CD8-positive, alpha-beta T cell (primary cell): ENCODE measurements at regions of chr10 and their contacts with region 1.

Region 1: GRCh38 chr10:30059209-30060107 is at the start of gene JCAD:
- DNase-seq: peak; percentile 12 to 65 (median 43)
- ATAC-seq: peak; percentile 81
- H3K4me3 ChIP-seq: no peak within 1 kb of the TSS
- H3K4me3 Mint-ChIP-seq: peak within 1 kb of the TSS; percentile 71
- H3K27ac ChIP-seq: no peak within 1 kb of the TSS
- H3K27ac Mint-ChIP-seq: no peak within 1 kb of the TSS
- H3K4me1 ChIP-seq: peaks cover 3% of the 10 kb centered on the region
- H3K4me1 Mint-ChIP-seq: peaks cover 7% of the 10 kb centered on the region
- H3K27me3 ChIP-seq: peaks cover 17 to 28% of the 10 kb centered on the region in 2 experiments
- H3K27me3 Mint-ChIP-seq: peaks cover 67% of the 10 kb centered on the region
- CTCF ChIP-seq: no peak
- total RNA-seq, gene JCAD: not detected

Region 2: DNA sequence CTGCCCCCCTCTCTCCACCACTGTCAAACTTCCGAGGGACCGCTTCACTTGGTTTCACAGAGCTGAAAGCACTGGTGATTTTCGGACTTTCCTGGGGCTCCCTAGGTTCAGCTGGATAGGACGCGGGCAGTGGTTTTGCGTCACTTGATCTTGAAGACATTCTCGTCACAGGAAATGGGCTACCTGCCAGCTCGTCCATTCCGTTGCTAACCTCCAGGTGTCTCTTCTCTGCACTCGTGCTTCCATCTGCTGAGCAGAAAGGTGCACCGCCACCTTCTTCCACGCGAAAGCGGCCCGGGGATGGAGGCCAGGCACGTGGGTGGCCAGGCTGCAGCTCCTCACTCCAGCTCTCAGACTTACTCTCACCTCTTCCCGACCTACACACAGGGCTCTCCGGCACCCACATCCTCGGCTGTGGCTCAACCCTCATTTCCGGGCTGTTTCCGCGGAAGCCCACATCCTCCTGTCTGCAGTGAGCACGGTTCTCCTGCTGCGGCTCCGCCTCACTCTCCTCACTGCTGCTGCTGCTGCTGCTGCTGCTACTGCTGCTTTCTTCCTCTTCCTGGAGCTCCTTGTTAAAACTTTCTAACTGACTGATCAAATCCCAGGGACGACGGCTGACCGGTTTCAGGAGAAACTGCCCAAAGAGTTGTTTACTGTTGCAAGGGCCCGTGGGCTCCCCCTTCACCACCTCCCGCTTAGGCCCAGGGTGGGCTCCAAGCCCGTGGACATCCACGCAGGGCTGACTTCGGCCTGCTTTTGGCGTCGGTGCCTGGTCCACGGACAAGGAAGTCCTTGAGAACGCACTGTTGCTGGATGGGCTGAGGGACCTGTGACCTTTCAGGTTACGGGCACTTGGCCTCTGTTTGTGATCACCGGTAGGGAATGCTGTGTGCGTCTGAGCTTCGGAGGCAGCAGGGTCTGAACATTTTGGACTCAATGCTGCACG is 32.1 kb before region 1 on chr10:
- CTCF ChIA-PET with region 1: no interaction called
- POLR2A ChIA-PET with region 1: no interaction called
- intact Hi-C with region 1: loop called in 1 of 2 experiments (anchors 2 kb)
- DNase-seq: peak; percentile 79 to 96 (median 85)
- ATAC-seq: peak; percentile 88
- H3K4me3 ChIP-seq: peak overlapping the region; percentile 33 to 53
- H3K4me3 Mint-ChIP-seq: peak overlapping the region; percentile 62
- H3K27ac ChIP-seq: peak overlapping the region in 1 of 2 experiments; percentile 41
- H3K27ac Mint-ChIP-seq: peak overlapping the region; percentile 80
- H3K4me1 ChIP-seq: peaks cover 37% of the 10 kb centered on the region
- H3K4me1 Mint-ChIP-seq: peaks cover 35% of the 10 kb centered on the region
- H3K27me3 ChIP-seq: peaks cover 24 to 34% of the 10 kb centered on the region in 2 experiments
- H3K27me3 Mint-ChIP-seq: peaks cover 55% of the 10 kb centered on the region
- CTCF ChIP-seq: peak; percentile 32

Region 3: DNA sequence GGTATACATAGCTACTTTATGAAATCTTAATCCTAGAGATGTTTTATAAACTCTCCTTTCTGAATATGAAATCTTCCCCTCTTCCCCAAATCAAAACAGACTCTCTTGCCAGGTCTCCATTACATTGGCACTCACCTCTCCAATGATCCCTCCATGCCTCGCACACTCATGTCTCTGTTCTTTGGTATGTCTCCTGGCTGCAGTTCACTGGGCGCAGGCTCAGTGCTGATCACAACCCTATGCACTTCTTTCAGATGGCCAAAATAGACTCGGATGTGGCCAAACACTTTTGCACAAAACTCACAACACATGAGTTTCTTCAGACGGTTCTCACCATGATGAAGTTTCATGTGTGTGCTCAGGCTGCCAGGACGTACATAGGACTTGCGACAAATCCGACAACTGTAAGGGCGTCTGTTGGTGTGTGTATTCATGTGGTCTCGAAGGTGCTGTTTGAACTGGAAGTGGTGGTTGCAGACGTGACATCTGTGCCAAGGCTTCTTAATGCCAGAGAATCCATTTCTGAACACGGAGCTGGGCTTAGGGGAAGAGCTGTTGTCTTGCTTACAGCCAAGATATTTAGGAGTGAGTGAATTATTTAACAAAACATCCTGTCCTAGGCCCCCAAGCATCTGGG is 789.1 kb after region 1 on chr10:
- CTCF ChIA-PET with region 1: no interaction called
- POLR2A ChIA-PET with region 1: no interaction called
- intact Hi-C with region 1: no loop called
- DNase-seq: peak in 1 of 9 experiments; percentile 51
- ATAC-seq: peak; percentile 70
- H3K4me3 ChIP-seq: no peak overlapping the region
- H3K4me3 Mint-ChIP-seq: no peak overlapping the region
- H3K27ac ChIP-seq: no peak overlapping the region
- H3K27ac Mint-ChIP-seq: peak overlapping the region; percentile 12
- H3K4me1 ChIP-seq: no peaks in the 10 kb centered on the region
- H3K4me1 Mint-ChIP-seq: peaks cover 13% of the 10 kb centered on the region
- H3K27me3 ChIP-seq: no peaks in the 10 kb centered on the region
- H3K27me3 Mint-ChIP-seq: no peaks in the 10 kb centered on the region
- CTCF ChIP-seq: no peak